ENCODE measurements at regions of chr12 and their contacts with region 1.

Region 1: DNA sequence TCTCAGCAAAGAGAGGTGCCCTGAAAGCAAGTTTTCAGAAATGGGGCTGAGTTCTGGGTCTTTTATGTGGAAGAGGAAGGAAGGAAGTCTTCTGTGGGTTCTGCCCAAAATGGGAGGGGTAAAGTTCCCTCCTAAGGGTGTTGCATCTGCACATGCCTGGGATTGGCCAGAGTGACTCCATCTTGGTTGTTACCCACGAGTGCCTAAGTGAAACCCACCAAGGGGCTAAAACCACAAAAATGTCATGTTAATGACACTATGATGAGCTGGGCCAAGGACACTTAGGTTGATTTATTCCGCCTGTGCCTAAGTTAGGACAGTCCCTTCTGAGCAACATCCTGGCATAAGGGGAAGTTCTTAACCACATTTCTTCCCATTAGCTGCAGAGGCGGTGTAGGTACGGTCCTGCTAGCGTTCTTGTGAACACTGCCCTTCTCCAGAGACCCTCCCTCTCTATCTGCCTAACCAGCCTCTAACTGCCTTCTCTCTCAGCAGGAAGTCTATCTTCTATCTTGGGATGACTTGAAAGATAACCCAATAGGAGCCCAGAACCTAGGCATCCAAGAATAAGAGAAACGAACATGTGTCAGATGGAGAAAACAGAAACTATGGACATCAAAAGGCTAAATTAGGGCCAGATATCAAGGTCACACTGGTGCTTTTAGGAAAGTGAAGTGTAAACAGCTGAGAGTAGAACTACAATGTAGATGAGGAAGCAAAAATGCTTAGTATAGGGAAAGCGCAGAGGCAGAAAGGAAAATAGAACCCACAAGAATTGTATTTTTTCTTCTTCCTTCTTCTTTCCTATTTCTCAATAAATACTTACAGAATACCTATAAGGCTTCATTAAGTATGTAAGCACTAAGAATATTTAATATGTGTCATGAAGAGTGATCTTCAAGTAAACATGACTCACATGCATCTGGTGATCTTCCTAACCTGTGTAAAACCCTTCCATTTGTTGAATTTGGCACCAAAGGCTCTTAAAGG is 104.2 kb upstream of the AMN1 start:
- DNase-seq: peak; percentile 16 to 72
- ATAC-seq: peak; percentile 75 to 81 (median 78)
- H3K4me3 ChIP-seq: no peak overlapping the region
- H3K4me3 Mint-ChIP-seq: peak overlapping the region; percentile 59
- H3K27ac ChIP-seq: peak overlapping the region; percentile 60
- H3K27ac Mint-ChIP-seq: peak overlapping the region; percentile 76 to 84
- H3K4me1 ChIP-seq: peaks cover 30% of the 10 kb centered on the region
- H3K4me1 Mint-ChIP-seq: peaks cover 33 to 44% of the 10 kb centered on the region in 2 donors
- H3K27me3 ChIP-seq: no peaks in the 10 kb centered on the region
- H3K27me3 Mint-ChIP-seq: no peaks in the 10 kb centered on the region
- CTCF ChIP-seq: no peak

Region 2: DNA sequence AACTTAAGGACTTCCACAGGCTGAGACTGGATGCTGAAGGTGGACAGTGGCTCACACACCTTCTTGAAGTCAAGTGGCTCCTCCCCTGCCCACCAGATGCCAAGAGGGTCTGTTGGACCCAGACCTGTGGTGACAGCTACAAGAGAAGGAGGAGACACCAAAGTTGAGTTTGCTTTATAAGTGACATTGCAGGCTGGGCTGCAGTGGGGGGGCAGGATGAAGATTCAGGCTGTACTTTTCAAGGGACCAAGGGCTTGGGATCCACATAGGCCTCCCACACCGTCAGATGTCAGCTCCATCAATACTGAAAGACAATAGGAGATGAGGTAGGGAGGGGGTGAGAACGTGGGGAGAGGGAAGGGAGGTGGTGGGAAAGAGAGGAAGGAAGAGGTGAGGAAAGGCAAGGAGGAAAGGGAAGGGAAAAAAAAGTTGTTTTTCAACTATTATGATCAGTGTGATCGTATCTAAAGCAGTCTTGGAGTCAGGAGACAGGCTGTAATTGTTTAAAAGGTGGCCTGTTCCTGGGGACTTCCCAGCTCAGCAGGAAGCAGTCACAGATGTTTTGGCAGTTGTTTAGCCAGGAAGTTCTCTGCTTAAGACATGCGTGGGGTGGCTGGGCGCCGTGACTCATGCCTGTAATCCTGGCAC is 42.0 kb after region 1 on chr12:
- intact Hi-C with region 1: loop called (anchors 5 kb)
- DNase-seq: peak; percentile 51 to 92
- ATAC-seq: peak; percentile 92 to 95 (median 94)
- H3K4me3 ChIP-seq: no peak overlapping the region
- H3K4me3 Mint-ChIP-seq: peak overlapping the region; percentile 49
- H3K27ac ChIP-seq: peak overlapping the region; percentile 69
- H3K27ac Mint-ChIP-seq: peak overlapping the region; percentile 91 to 96
- H3K4me1 ChIP-seq: peaks cover 41% of the 10 kb centered on the region
- H3K4me1 Mint-ChIP-seq: peaks cover 40 to 44% of the 10 kb centered on the region in 2 donors
- H3K27me3 ChIP-seq: no peaks in the 10 kb centered on the region
- H3K27me3 Mint-ChIP-seq: no peaks in the 10 kb centered on the region
- CTCF ChIP-seq: no peak

Measured in natural killer cell (primary cell).